T-cell (primary cell): ENCODE measurements at regions of chr15 and their contacts with region 1.

Region 1: GRCh38 chr15:62873203-62873602 is 169.3 kb upstream of the TPM1 start:
- DNase-seq: no peak
- ATAC-seq: no peak
- H3K4me3 ChIP-seq: no peak overlapping the region
- H3K4me3 Mint-ChIP-seq: no peak overlapping the region
- H3K27ac ChIP-seq: no peak overlapping the region
- H3K27ac Mint-ChIP-seq: no peak overlapping the region
- H3K4me1 ChIP-seq: no peaks in the 10 kb centered on the region
- H3K4me1 Mint-ChIP-seq: no peaks in the 10 kb centered on the region
- H3K27me3 ChIP-seq: peaks cover 0 to 21% of the 10 kb centered on the region in 2 experiments
- H3K27me3 Mint-ChIP-seq: peaks cover 10 to 12% of the 10 kb centered on the region in 2 donors

Region 2: DNA sequence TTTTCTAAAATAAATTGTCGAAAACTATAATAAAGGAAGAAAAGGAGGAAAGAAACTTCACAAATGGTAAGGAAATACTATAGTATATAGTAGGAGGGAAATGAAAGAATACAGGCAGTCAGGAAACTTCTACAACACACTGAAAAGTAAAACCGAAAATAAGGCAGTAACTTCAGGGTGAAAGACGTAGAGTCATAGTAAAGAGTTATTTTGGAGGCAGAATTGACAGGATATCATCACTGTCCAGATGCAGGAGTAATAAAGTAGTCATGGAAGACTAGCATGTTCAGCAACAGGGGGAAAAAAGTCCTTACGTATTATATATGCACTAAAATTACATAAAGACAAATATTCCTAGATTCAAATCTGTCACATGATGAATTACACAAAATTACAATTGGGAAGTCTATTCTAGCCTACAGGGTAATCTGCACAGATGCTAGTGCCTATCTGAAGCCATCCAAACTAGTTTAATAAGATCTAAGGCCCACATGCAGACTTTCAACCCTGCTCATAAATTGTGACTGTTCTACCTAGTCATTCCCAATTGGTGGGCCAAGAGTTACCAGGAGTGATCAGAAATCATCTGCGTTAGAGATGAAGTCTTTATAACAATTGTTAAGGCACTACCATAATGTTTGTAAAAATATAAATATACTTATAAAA is 827.0 kb before region 1 on chr15:
- CTCF ChIA-PET with region 1: no interaction called
- POLR2A ChIA-PET with region 1: no interaction called
- DNase-seq: no peak
- ATAC-seq: peak in 2 of 4 experiments; percentile 46 to 59
- H3K4me3 ChIP-seq: no peak overlapping the region
- H3K4me3 Mint-ChIP-seq: peak overlapping the region; percentile 20 to 64 (median 34)
- H3K27ac ChIP-seq: no peak overlapping the region
- H3K27ac Mint-ChIP-seq: peak overlapping the region; percentile 53 to 66
- H3K4me1 ChIP-seq: peaks cover 3 to 6% of the 10 kb centered on the region in 2 experiments
- H3K4me1 Mint-ChIP-seq: peaks cover 38 to 40% (median 40%) of the 10 kb centered on the region in 3 donors
- H3K27me3 ChIP-seq: no peaks in the 10 kb centered on the region
- H3K27me3 Mint-ChIP-seq: no peaks in the 10 kb centered on the region

Region 3: DNA sequence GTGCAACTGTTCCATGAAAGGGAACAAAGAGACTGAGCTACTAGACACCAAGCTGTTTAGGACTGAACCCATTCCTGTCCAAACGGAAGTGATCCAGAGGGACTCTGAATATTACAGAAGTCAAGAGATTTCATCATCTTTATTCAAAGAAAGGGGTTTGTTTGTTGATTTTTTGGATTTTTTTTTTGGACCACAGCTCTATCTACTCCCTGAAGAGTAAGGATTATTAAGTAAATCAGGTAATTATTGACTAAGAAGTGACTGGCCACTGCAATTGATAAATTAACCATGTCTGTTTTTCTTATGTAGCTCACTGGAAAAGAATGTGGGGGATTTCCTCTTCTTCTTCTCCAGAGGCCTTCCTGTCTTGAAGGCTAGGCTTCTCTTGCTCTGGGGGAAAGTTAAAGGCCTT is 22.7 kb after region 1 on chr15:
- CTCF ChIA-PET with region 1: interaction called in 1 of 2 experiments, 10 read pairs
- POLR2A ChIA-PET with region 1: interaction called in 1 of 2 experiments, 3 read pairs
- DNase-seq: no peak
- ATAC-seq: no peak
- H3K4me3 ChIP-seq: no peak overlapping the region
- H3K4me3 Mint-ChIP-seq: no peak overlapping the region
- H3K27ac ChIP-seq: no peak overlapping the region
- H3K27ac Mint-ChIP-seq: no peak overlapping the region
- H3K4me1 ChIP-seq: no peaks in the 10 kb centered on the region
- H3K4me1 Mint-ChIP-seq: no peaks in the 10 kb centered on the region
- H3K27me3 ChIP-seq: peaks cover 0 to 16% of the 10 kb centered on the region in 2 experiments
- H3K27me3 Mint-ChIP-seq: peaks cover 15 to 18% of the 10 kb centered on the region in 2 donors